Left ventricle myocardium superior (tissue), 1 donor: ENCODE measurements at regions of chr13 and their contacts with region 1.

Region 1: DNA sequence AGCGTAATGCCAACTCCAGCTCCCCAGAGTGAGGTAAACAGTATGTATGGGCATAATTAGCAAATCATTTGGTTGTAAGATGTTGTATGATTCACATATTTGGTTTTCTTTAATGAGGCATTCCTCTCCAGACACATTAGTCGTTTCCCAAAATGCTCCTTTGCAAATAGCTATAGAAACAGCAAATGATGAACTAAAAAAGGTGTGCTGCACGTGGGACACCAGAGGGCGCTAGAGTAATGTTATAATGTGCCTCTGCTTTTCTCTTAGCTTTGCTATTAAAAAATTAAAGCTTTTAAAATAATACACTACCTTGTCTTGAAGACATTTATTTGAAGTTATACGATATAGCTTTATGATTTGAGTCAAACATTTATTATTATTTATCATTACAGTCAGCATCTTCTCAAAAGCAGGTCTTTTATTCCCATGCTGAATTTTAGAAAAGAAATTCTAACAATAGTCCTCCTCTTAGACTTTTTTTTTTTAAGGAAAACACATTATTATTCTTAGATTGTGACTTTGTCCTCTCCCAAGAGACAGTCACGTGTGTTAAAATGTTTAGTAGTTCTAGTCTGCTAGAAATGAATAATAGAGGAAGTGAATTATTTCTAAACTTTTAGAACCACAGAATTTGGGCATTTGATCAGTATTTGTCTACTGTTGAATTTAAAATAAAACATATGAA is 121.6 kb upstream of the FRY start:
- DNase-seq: peak; percentile 48
- ATAC-seq: peak; percentile 51

Region 2: GRCh38 chr13:31638577-31638976 is 271.4 kb before region 1 on chr13:
- intact Hi-C with region 1: no loop called
- DNase-seq: no peak
- ATAC-seq: no peak

Region 3: DNA sequence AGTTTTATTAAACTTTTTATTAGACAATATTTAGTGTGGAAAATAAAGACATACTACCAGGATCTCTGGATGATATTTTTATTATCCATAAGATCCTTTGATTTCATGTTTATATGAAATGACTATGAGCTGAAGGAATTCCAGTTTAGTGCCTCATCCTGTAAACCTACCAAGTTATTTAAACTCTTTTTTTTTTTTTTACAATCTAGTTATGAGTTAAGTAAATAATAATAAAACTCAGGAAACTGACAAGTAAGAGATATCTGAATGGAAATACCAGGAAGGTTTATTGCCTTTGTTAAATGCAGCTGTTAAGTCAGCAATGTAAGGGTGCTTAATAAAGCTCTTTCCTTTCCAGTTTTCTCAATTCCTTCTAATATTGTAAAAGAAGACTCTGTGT is 116.8 kb before region 1 on chr13:
- intact Hi-C with region 1: no loop called
- DNase-seq: no peak
- ATAC-seq: no peak

Region 4: GRCh38 chr13:32098272-32098671 is 188.3 kb after region 1 on chr13:
- intact Hi-C with region 1: no loop called
- DNase-seq: no peak
- ATAC-seq: peak; percentile 64

Region 5: GRCh38 chr13:32205431-32206096 is 295.6 kb after region 1 on chr13:
- intact Hi-C with region 1: loop called (anchors 5 kb)
- DNase-seq: no peak
- ATAC-seq: peak; percentile 10